ENCODE measurements at regions of chr7 and their contacts with region 1.

Region 1: DNA sequence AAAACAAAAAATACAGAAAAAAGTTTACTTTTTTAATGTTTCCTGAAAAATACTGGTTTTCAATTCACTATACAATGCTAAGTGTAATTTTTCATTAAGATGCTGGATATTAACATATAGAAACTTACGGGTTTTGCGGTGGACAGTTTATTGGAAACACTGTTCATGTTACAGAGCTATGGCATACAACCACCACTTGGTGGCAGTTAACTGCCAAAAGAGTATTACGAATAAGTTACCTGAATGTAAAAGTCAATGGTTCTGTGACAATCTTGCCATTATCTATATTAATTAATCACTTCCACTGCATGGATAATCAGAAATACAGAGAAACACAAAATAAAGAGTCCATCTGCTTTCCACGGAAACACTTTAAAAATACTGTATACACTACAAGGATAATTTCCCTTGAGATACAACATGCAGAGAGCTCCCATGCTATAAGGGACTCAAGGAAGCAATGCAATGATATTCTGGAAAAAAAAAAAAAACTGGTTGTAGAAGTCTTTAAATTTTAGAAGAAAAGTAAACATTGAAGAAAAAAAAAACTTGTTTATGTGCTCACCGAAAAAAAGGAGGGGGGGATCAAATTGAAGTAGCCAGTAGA is 97.0 kb downstream of the TPK1 start:
- DNase-seq: peak; percentile 35
- H3K4me3 Mint-ChIP-seq: no peak overlapping the region
- H3K27ac Mint-ChIP-seq: no peak overlapping the region
- H3K4me1 Mint-ChIP-seq: peaks cover 7% of the 10 kb centered on the region
- H3K27me3 Mint-ChIP-seq: no peaks in the 10 kb centered on the region

Region 2: DNA sequence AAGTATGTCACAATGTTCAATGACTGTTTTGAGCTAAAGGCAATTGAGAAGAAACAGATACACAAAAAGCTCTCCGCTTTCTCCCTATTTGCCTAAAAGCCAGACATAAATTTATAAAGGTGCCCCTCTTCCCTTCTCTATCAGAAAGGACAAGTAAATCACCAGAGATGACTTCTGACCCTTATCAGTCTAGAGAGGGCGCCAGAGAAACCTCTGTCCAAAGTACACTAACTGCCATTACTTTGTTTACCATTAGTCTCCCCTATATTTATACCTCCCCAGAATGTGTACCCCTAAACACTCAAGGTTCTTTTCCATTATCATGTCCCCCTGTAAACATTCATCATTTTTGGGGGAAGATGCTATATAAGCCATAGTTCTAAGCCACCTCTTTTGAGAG is 47.7 kb after region 1 on chr7:
- CTCF ChIA-PET with region 1: no interaction called
- intact Hi-C with region 1: loop called (anchors 1 kb)
- DNase-seq: no peak
- H3K4me3 Mint-ChIP-seq: no peak overlapping the region
- H3K27ac Mint-ChIP-seq: no peak overlapping the region
- H3K4me1 Mint-ChIP-seq: peaks cover 22% of the 10 kb centered on the region
- H3K27me3 Mint-ChIP-seq: no peaks in the 10 kb centered on the region

Region 3: DNA sequence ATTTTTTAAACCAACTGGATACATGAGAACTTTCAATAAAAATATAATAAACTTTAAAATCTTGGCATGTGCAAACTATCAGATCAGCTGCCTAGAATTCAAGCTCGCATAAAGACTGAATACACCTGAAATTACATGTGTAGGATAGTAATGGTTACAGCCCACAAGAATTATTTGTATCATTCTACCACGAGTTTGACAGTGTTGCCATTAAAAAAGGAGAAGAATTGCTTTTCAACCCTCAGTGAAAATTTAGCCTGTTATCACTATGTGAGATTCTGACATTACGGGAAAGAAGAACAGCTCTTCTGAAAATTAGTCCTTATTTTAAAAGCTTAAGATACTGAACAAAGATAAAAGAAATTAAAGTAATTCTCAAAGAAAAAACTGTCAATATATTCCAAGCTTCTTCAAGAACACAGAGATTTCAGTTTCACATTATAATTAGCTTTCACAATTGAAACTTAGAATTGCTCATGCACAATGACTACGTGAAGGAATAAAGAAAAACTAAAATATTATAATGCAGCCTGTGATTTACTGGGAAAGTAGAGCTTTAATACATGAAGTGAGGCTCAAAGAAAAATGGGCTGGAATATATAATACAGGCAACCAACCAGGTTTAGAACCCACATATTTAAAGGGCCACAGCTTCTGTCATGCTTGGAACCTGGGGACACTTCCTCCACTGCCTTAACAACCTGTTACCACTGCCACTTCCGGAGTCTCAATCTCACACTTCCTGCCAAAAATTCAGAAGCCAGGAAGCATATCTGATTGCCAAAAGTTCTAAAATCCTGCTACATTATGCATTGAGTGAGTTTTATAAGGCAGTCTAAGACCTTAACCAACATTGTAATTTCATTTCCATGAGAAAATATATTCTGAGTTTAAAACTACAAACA is 73.8 kb after region 1 on chr7:
- CTCF ChIA-PET with region 1: no interaction called
- intact Hi-C with region 1: loop called (anchors 2 kb)
- DNase-seq: peak; percentile 70
- H3K4me3 Mint-ChIP-seq: peak overlapping the region; percentile 72
- H3K27ac Mint-ChIP-seq: peak overlapping the region; percentile 95
- H3K4me1 Mint-ChIP-seq: peaks cover 61% of the 10 kb centered on the region
- H3K27me3 Mint-ChIP-seq: no peaks in the 10 kb centered on the region

Region 4: DNA sequence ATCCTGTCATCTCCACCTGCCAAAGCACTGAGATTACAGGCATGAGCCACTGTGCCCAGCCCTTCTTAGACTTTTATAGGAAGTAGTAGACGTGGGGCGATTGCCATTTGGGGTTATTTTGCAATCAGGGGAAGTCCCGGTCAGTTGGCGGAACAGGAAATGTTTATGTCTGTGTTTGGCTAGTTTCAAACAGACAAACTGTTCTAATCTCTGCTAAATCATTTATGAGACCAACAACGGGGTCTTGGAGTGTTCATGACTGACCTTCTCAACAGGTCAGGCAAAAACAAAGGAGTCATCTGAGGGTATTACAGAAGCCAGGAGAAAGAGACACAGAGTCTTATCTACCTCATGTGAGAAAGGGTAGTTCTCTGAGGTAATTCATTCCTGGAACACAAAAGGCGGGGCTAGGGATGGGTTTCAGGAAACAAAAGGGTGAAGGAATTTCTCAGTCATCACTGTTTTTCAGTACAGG is 103.6 kb after region 1 on chr7:
- CTCF ChIA-PET with region 1: interaction called, 4 read pairs
- intact Hi-C with region 1: loop called (anchors 2 kb)
- DNase-seq: peak; percentile 69
- H3K4me3 Mint-ChIP-seq: peak overlapping the region; percentile 15
- H3K27ac Mint-ChIP-seq: peak overlapping the region; percentile 89
- H3K4me1 Mint-ChIP-seq: peaks cover 24% of the 10 kb centered on the region
- H3K27me3 Mint-ChIP-seq: no peaks in the 10 kb centered on the region

Region 5: GRCh38 chr7:144885478-144885877 is 146.7 kb after region 1 on chr7:
- CTCF ChIA-PET with region 1: no interaction called
- intact Hi-C with region 1: no loop called
- DNase-seq: no peak
- H3K4me3 Mint-ChIP-seq: no peak overlapping the region
- H3K27ac Mint-ChIP-seq: no peak overlapping the region
- H3K4me1 Mint-ChIP-seq: no peaks in the 10 kb centered on the region
- H3K27me3 Mint-ChIP-seq: no peaks in the 10 kb centered on the region

Region 6: DNA sequence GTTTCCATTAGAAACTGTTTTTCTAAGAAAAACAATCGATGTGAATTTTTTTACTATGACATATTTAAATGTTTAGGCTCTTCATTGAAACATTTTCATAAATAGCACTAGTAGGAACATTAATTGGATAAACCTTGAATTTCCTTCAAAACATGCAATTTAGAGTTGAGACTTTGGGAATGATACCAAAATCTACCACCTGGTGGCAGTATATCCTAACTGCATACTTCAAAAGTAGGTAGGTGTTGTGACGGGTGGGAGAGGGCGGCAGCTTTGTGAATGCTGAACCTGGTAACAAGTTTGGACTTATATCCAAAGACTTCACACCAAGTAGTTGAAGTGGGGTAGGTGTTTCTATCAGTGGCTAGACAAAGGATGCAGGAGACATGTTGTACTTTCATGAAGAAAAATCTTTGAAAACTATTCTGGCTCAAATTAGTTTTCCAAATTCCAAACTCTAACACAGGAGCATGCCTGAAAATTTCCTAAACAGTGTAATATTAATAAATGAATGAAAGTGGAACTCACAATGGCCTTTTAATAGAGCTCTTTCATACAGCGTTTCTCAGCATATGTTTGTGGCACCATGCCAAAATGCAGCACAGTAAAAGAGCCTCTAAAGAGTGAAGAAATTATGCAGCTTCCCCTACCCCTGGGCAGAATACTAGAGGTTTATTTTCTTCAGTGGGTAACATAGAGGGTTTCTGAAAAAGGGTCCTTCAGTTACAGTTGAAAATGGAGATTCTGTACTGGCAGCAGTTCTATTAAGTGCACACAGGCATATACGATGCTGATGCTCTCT is 298.0 kb after region 1 on chr7:
- CTCF ChIA-PET with region 1: interaction called, 4 read pairs
- intact Hi-C with region 1: loop called (anchors 1 kb)
- DNase-seq: peak; percentile 49
- H3K4me3 Mint-ChIP-seq: no peak overlapping the region
- H3K27ac Mint-ChIP-seq: no peak overlapping the region
- H3K4me1 Mint-ChIP-seq: peaks cover 3% of the 10 kb centered on the region
- H3K27me3 Mint-ChIP-seq: peaks cover 13% of the 10 kb centered on the region

Measured in activated naive CD4-positive, alpha-beta T cell treated with anti-CD3 and anti-CD28 coated beads for 36 hours (primary cell).